Activated naive CD4-positive, alpha-beta T cell treated with anti-CD3 and anti-CD28 coated beads for 36 hours (primary cell): ENCODE measurements at regions of chr12 and their contacts with region 1.

Region 1: DNA sequence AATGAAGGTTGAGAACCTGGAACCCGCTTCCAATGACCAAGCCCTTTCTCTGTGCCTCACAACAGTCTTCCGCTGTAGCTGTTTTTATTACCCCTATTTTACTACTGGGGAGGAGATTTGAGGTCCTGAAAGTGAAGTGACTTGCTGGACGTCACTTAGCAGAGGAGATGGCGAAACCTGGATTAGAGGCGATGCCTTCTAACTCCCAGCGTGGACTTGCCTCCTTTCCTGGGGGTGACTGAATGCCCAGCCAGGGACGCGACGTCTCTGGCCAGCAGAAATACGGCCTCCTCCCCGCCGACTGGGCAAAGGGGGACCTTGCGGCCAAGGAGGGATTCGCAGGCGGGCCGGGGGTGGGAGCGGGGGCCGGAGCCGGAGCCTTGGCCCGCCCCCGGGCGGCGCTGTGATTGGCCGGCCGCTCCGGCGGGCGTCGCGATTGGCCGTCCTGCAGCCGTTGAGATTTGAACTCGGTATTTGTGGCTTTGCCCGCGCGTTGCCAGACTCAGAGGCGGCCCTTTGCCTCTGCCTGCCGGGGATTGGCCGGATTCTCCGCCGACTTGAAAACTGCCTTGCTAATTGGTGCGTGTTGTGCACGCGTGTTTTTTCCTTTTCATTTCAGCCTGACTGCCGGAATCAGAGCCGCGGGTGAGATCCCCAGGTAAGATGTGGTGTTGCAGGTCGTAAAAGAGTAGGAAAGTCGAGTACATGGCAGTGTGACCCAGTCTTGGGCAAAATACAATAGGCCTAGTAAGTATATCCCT is at the start of gene NCAPD2:
- DNase-seq: peak; percentile 98
- H3K4me3 Mint-ChIP-seq: peak within 1 kb of the TSS; percentile 98
- H3K27ac Mint-ChIP-seq: peak within 1 kb of the TSS; percentile 99
- H3K4me1 Mint-ChIP-seq: peaks cover 33% of the 10 kb centered on the region
- H3K27me3 Mint-ChIP-seq: no peaks in the 10 kb centered on the region
- total RNA-seq, gene NCAPD2: 252 to 261 TPM

Region 2: GRCh38 chr12:6430124-6430989 is 63.3 kb before region 1 on chr12:
- CTCF ChIA-PET with region 1: interaction called, 3 read pairs
- intact Hi-C with region 1: loop called (anchors 1 kb)
- DNase-seq: peak; percentile 78
- H3K4me3 Mint-ChIP-seq: peak overlapping the region; percentile 46
- H3K27ac Mint-ChIP-seq: peak overlapping the region; percentile 84
- H3K4me1 Mint-ChIP-seq: peaks cover 85% of the 10 kb centered on the region
- H3K27me3 Mint-ChIP-seq: no peaks in the 10 kb centered on the region

Region 3: DNA sequence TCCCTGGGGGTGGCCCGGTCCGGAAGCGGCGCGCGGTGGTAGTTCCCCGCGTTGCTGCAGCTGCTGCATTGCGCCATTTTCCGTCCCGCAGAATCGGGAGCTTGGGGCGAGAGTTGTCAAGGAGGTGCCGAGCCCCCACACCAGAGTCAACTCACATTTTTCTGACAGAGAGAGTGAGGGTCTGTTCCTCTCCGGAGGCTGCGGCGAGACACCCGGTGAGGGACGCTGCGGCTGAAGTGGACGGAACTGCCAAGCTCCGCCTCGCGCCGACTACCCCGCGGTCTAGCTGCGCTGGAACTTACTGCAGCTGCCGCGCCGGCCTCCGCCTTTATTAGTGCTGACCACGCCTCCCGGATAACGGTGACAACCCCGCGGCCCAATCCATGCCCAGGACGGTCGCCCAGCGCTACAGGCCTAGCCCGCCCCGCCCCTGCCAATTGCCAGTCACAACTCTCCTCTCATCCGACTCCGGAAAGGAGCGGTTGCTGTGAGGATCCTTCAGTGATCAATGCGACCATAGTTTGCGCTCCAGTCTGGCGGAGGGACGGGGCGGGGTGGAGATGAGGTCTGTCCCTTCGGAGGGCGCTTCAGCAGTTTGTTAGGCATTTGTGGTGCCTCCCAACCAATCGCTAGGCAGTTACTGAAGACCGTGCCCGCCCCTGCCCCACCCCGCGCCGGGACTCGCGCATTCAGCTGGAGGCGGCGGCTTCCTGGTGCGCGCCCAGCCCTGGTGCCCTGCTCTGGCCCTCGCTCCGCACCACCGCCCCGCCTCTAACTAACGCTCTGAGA is 23.1 kb before region 1 on chr12 and contains the start of gene VAMP1:
- CTCF ChIA-PET with region 1: interaction called, 5 read pairs
- intact Hi-C with region 1: loop called (anchors 1 kb)
- DNase-seq: peak; percentile 99
- H3K4me3 Mint-ChIP-seq: peak within 1 kb of the TSS; percentile 91
- H3K27ac Mint-ChIP-seq: peak within 1 kb of the TSS; percentile 90
- H3K4me1 Mint-ChIP-seq: peaks cover 53% of the 10 kb centered on the region
- H3K27me3 Mint-ChIP-seq: no peaks in the 10 kb centered on the region
- total RNA-seq, gene VAMP1: 31.9 to 33.5 TPM

Region 4: DNA sequence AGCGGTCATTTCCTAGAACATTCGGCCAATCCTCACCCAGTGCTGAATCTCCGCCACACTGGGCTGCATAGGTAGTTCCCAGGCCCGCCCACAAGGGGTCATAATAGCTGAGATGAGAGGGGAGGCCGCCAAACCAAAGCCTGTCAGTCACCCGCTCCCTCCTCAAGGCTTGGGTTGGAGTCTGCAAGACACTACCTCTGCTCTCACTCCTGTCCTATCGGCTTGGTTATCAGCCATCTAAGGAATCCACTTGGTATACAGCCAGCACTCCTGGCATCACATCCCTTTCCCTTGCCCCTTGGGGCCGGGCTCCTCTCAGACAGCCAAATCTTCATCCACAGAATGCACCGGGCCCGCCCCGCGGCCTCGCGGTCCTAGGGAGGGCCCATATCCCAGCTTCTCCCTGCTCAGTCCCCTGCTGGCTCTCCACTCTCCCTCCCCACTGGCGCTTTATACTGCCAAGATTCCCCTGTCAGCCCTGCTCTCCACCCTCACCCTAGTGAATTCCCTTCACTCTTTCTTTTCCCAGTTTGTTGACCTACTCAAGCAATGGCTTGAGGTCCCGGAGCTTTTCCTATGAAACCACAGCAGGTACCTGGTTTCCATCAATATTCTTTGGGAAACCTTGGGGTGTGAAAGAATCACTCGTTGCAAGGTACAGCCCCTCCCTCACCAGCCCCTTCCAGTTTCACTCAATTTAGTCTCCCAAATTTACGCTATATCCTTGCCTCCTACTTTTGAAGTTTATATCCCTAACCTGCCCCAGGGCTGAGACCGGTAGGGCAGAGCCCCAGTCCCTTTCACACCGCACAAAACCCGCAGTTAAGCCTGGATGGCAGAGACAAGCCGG is 60.7 kb after region 1 on chr12:
- CTCF ChIA-PET with region 1: interaction called, 3 read pairs
- intact Hi-C with region 1: loop called (anchors 1 kb)
- DNase-seq: peak; percentile 86
- H3K4me3 Mint-ChIP-seq: peak overlapping the region; percentile 78
- H3K27ac Mint-ChIP-seq: peak overlapping the region; percentile 1
- H3K4me1 Mint-ChIP-seq: peaks cover 52% of the 10 kb centered on the region
- H3K27me3 Mint-ChIP-seq: no peaks in the 10 kb centered on the region

Region 5: GRCh38 chr12:6569312-6569711 is 75.6 kb after region 1 on chr12:
- CTCF ChIA-PET with region 1: interaction called, 5 read pairs
- intact Hi-C with region 1: loop called (anchors 2 kb)
- DNase-seq: no peak
- H3K4me3 Mint-ChIP-seq: peak overlapping the region; percentile 98
- H3K27ac Mint-ChIP-seq: no peak overlapping the region
- H3K4me1 Mint-ChIP-seq: peaks cover 57% of the 10 kb centered on the region
- H3K27me3 Mint-ChIP-seq: no peaks in the 10 kb centered on the region

Region 6: DNA sequence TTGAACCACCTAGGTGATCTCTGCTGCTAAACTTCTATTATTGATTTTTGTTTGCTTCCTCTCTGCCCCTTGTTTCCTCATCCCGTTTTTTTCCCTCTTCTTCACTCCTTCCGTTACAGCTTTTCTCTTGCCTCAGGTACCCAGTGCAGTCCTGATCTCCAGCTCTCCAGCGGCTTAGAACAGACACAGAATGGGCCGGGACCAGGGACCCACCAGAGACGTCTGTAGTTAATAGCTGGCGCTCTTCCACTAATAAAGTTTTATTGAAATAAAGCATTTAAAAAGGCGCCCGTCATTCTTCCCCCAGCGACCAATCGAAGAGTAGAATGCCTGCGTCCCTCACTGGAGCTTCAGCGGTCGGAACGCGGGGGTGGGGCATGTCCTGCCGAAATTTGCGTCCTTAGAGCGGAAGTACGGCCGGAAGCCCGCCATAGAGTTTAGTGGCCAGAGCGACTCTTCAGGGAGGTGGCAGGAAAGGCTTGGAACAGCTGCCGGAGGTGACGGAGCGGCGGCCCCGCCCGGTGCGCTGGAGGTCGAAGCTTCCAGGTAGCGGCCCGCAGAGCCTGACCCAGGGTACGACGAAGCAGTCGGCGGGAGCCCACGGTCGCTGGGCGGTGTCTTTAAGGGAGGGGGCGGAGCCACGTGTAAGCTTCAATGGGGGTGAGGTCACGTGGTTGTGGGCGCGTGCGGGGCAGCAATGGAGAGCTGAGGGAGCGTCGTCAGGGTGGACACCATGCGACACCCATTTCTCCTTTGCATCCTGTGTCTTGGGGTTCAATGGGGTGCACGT is 230.1 kb after region 1 on chr12 and contains the start of gene COPS7A:
- CTCF ChIA-PET with region 1: no interaction called
- intact Hi-C with region 1: loop called (anchors 1 kb)
- DNase-seq: peak; percentile 98
- H3K4me3 Mint-ChIP-seq: peak within 1 kb of the TSS; percentile 91
- H3K27ac Mint-ChIP-seq: peak within 1 kb of the TSS; percentile 89
- H3K4me1 Mint-ChIP-seq: peaks cover 25% of the 10 kb centered on the region
- H3K27me3 Mint-ChIP-seq: no peaks in the 10 kb centered on the region
- total RNA-seq, gene COPS7A: 43.0 to 47.8 TPM

Region 7: DNA sequence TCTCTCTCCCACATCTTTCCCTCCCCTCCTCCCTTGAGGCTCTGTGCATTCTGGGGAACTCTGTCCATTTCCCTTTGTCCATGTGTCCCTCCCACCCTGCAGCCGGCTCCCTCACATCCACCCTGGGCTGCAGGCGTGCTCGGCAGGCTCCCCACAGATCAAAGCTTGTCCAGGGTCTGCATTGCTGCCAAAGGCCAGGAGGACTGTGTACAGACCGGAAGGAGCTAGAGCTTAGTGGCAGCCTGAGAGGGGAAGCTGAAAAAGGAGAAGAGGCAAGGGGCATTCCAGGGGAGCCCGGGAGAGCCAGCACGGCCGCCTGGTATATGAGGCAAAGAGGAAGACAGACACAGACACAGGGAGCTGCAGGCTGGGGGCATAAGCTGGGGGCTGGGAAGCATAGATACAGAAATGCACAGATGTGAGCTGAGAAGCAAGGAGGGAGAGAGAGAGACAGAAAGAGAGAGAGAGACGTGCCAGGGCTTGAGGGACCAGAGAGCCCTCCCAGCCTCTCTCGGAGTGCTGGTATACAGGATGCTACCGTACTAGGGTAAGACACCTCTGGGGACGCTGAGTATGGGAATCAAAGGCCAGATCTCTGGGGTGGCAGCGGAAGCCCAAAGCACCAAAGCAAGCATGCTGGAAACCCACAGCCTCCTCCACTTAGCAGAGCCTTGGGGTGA is 299.0 kb after region 1 on chr12:
- CTCF ChIA-PET with region 1: no interaction called
- intact Hi-C with region 1: loop called (anchors 5 kb)
- DNase-seq: peak; percentile 61
- H3K4me3 Mint-ChIP-seq: peak overlapping the region; percentile 97
- H3K27ac Mint-ChIP-seq: peak overlapping the region; percentile 96
- H3K4me1 Mint-ChIP-seq: peaks cover 51% of the 10 kb centered on the region
- H3K27me3 Mint-ChIP-seq: no peaks in the 10 kb centered on the region